Activated B cell treated with CpG ODN at 0.5 μM for 24 hours (primary cell): ENCODE measurements at regions of chr1 and their contacts with region 1.

Region 1: DNA sequence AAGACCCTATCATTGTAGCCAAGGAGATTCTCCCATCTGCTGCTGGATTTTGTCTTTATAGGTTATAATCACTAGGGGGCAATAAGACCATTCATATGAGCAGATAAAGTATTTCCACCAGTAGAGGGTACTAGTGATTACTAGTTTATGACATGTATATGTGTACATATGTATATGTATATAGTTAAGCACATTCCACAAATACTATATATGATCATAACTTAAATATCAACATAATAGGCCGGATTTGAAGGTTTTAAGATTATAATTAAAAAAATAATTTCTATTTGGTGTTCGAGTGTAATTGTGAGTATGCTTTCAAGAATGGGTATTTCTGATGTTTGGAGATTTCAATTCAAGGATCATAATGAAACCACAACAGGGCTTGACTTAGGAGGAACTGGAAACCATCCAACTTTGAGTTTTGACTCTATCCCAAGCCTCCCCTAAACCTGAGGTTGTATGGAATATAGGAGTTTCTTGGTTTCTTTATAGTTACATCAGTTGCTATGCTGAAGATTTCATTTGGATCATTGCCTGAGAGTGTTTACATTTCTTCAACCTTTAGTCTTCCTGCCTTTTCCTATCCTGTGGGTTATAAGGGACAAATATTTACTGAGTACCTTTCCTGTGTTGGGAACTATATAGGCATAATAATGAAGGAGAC is 16.9 kb downstream of the TCEANC2 start:
- DNase-seq: no peak
- ATAC-seq: peak; percentile 95
- H3K4me3 Mint-ChIP-seq: no peak overlapping the region
- H3K27ac Mint-ChIP-seq: no peak overlapping the region
- H3K4me1 Mint-ChIP-seq: no peaks in the 10 kb centered on the region
- H3K27me3 Mint-ChIP-seq: no peaks in the 10 kb centered on the region
- CTCF ChIP-seq: peak; percentile 88

Region 2: GRCh38 chr1:54081306-54082270 is 11.3 kb after region 1 on chr1:
- CTCF ChIA-PET with region 1: interaction called, 5 read pairs
- POLR2A ChIA-PET with region 1: no interaction called
- intact Hi-C with region 1: loop called (anchors 1 kb)
- DNase-seq: peak; percentile 19
- ATAC-seq: peak; percentile 62
- H3K4me3 Mint-ChIP-seq: no peak overlapping the region
- H3K27ac Mint-ChIP-seq: no peak overlapping the region
- H3K4me1 Mint-ChIP-seq: no peaks in the 10 kb centered on the region
- H3K27me3 Mint-ChIP-seq: no peaks in the 10 kb centered on the region
- CTCF ChIP-seq: no peak

Region 3: DNA sequence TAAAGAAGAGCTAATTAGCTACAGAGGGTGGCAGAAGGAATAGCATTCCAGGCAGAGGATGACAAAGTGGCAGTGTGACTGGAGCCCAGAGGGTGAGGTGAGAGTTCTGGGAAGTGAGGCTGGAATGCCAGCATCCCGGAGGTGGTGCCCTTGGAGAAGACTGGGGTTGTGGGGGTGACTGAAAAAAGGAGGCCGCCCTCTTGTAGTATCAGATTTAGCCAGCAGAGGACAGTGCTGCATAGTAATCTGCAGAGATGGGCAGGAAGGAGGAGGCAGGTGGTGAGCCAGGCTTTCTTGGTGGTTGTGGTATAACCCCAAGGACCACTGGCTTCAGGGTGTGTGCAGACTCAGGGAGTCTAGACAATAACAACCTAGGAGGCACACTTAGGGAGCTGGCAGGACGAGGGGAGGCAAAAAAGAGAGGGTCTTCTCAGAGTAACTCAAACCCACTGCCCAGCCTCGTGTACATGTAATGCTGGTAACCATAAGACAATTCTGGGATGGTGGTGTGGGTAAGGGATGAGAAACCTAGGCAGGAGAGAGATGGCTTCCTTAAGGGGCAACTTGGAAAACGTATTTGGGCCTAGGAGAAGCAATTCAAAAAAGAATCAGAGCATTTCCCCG is 601.8 kb after region 1 on chr1:
- CTCF ChIA-PET with region 1: no interaction called
- POLR2A ChIA-PET with region 1: no interaction called
- intact Hi-C with region 1: loop called (anchors 2 kb)
- DNase-seq: peak; percentile 20
- ATAC-seq: peak; percentile 57
- H3K4me3 Mint-ChIP-seq: no peak overlapping the region
- H3K27ac Mint-ChIP-seq: no peak overlapping the region
- H3K4me1 Mint-ChIP-seq: no peaks in the 10 kb centered on the region
- H3K27me3 Mint-ChIP-seq: no peaks in the 10 kb centered on the region
- CTCF ChIP-seq: no peak

Region 4: GRCh38 chr1:54810100-54810942 is 740.0 kb after region 1 on chr1:
- CTCF ChIA-PET with region 1: interaction called, 4 read pairs
- POLR2A ChIA-PET with region 1: no interaction called
- intact Hi-C with region 1: loop called (anchors 1 kb)
- DNase-seq: peak; percentile 51
- ATAC-seq: peak; percentile 90
- H3K4me3 Mint-ChIP-seq: no peak overlapping the region
- H3K27ac Mint-ChIP-seq: no peak overlapping the region
- H3K4me1 Mint-ChIP-seq: no peaks in the 10 kb centered on the region
- H3K27me3 Mint-ChIP-seq: peaks cover 2% of the 10 kb centered on the region
- CTCF ChIP-seq: no peak